ENCODE measurements at regions of chr1 and their contacts with region 1.

Region 1: DNA sequence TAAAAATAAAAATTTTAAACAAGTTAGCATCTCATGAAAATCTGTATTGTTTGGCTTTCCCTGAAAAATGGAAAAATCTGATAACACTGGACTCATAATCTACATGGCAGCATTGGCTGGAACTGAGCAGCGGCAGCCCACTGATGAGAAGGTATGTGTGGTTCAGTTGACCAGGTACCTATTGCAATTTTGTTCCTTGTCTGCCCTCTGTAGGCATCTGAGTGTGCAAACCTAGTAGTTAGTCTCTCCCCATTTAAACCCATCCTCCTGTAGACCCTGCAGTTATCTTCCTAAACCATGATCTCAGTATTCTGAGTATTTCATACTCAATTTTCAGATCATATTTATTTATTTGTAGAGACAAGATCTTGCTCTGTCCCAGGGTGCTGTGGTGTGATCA is 59.4 kb upstream of the SERBP1 start:
- ATAC-seq: peak in 2 of 8 experiments; percentile 34 to 61
- H3K4me3 ChIP-seq: no peak overlapping the region
- H3K27ac ChIP-seq: no peak overlapping the region
- H3K4me1 ChIP-seq: no peaks in the 10 kb centered on the region

Region 2: GRCh38 chr1:66764994-66765578 is 724.6 kb before region 1 on chr1:
- in situ Hi-C with region 1: loop called in 2 of 9 experiments (anchors 25 kb)
- ATAC-seq: peak in 3 of 8 experiments; percentile 60 to 75 (median 63)
- H3K4me3 ChIP-seq: no peak overlapping the region
- H3K27ac ChIP-seq: no peak overlapping the region
- H3K4me1 ChIP-seq: no peaks in the 10 kb centered on the region

Region 3: DNA sequence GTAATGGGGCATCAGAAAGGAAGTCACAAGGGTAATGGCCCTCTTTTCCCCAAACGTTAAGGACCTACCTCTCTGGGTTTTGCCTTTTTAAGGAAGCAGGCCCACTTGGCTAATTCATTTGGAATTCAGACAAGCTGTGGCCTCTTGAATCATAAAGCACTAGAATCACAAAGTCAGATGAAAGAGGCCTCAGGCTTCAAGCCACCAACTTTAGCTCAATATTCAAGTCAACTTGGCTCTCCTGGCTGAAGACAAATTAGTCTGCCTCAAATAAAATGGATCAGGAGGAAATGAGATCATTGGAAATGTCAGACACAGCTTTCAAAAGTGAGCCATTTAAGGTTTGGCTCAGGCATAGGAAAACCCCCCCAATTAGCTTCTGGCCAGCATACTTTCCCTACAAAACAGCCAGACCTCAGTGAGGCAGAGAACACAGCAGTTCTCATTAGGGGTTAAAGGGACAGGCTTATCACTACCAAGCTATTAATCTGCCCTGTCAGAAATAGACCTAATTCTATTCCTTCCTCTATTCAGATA is 470.0 kb before region 1 on chr1:
- in situ Hi-C with region 1: loop called in 1 of 9 experiments (anchors 25 kb)
- ATAC-seq: peak in 2 of 8 experiments; percentile 20 to 44
- H3K4me3 ChIP-seq: no peak overlapping the region
- H3K27ac ChIP-seq: no peak overlapping the region
- H3K4me1 ChIP-seq: no peaks in the 10 kb centered on the region

Region 4: DNA sequence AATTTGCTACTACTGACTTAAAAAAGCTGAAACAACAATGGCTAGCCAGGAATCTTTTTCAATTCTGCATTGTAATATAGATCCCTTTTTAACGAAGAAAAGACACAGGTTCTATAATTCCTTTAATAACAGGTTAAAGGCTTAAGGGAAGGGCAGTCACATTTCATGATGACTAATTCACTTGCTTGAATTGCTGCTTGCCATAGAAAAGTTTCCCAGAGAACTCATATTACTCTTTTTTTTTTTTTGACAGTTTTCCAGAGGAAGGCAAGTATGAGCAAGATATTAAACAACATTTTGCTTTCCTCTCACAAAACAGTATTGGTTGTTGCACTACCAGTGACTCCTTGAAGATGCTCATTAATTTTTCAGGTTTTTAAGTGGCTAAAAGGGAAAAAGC is 262.4 kb before region 1 on chr1:
- in situ Hi-C with region 1: loop called in 4 of 9 experiments (anchors 10 to 25 kb)
- ATAC-seq: peak in 2 of 8 experiments; percentile 56 to 73
- H3K4me3 ChIP-seq: no peak overlapping the region
- H3K27ac ChIP-seq: no peak overlapping the region
- H3K4me1 ChIP-seq: peaks cover 14 to 24% of the 10 kb centered on the region in 2 donors

Region 5: GRCh38 chr1:67347688-67348472 is 141.8 kb before region 1 on chr1:
- in situ Hi-C with region 1: loop called in 2 of 9 experiments (anchors 25 kb)
- ATAC-seq: peak; percentile 54 to 95 (median 80)
- H3K4me3 ChIP-seq: no peak overlapping the region
- H3K27ac ChIP-seq: no peak overlapping the region
- H3K4me1 ChIP-seq: peaks cover 0 to 2% of the 10 kb centered on the region in 2 donors

Region 6: DNA sequence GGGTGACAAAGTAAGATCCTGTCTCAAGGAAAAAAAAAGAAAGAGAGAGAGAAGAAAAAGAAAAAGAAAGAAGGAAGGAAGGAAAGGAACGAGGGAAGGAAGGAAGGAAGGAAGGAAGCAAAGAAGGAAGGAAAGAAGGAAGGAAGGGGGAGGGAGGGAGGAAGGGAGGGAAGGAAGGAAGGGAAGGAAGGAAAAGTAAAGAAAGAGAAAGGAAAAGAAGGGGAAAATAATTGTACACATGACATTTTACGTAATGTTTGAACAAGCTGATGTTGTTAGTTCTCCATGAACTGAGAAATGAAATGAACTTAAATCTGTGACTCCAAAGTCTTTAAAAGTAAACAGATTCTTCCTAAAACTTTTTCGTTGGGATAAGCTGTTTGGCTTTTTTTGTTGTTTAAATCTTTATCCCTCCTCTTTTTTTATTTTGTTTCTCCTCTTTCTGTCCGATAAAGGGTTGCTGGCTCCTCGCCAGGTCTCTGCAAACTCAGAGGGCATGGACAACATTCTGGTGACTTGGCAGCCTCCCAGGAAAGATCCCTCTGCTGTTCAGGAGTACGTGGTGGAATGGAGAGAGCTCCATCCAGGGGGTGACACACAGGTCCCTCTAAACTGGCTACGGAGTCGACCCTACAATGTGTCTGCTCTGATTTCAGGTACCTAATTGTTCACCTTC is 122.1 kb before region 1 on chr1:
- in situ Hi-C with region 1: loop called in 1 of 9 experiments (anchors 25 kb)
- ATAC-seq: peak in 5 of 8 experiments; percentile 27 to 79 (median 54)
- H3K4me3 ChIP-seq: no peak overlapping the region
- H3K27ac ChIP-seq: no peak overlapping the region
- H3K4me1 ChIP-seq: peaks cover 4 to 11% of the 10 kb centered on the region in 2 donors

Region 7: DNA sequence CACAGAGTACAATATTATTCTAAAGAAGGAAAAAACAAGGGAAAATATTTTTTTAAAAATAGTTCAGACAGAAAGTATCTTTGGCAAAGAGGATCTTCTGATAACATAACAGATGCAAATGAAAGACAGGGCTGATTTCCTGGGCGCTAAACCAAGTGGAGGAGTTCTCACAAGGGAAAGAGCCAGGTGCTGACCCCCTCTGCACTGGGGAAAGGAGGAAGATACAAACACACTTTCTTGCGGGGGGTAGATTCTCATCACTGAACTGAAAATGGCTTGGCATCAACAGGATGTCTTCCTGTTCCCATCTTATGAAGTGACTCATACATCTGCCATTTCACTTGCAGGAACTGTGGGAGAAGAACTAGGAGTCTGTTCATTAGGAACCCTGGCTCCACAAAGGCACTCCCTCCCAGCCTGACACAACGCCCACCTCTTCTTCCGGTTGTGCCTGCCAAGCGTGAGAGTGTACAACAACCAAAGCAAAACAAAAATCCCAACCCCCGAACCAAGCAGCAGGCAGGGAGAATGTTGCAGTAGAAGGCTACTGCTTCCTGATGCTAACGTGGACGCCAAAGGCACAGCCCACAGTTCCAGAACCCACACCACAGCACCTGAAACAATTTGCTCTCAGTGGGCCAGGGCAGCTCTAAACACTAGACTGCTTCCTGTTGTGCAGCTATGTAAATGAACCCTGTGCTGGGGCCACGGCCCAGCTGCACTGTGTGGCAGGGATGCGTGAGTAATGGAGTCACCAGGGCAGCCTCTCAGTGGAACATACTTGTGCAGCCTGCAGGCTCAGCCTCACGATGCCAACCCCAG is 246.4 kb after region 1 on chr1:
- in situ Hi-C with region 1: no loop called
- ATAC-seq: peak; percentile 46 to 97 (median 92)
- H3K4me3 ChIP-seq: no peak overlapping the region
- H3K27ac ChIP-seq: no peak overlapping the region
- H3K4me1 ChIP-seq: peaks cover 0 to 5% of the 10 kb centered on the region in 2 donors